ENCODE measurements at regions of chr5 and their contacts with region 1.

Region 1: GRCh38 chr5:95591490-95591901 is 28.4 kb upstream of the GPR150 start:
- DNase-seq: no peak
- H3K4me3 Mint-ChIP-seq: no peak overlapping the region
- H3K27ac Mint-ChIP-seq: no peak overlapping the region
- H3K4me1 Mint-ChIP-seq: peaks cover 30% of the 10 kb centered on the region
- H3K27me3 Mint-ChIP-seq: no peaks in the 10 kb centered on the region

Region 2: DNA sequence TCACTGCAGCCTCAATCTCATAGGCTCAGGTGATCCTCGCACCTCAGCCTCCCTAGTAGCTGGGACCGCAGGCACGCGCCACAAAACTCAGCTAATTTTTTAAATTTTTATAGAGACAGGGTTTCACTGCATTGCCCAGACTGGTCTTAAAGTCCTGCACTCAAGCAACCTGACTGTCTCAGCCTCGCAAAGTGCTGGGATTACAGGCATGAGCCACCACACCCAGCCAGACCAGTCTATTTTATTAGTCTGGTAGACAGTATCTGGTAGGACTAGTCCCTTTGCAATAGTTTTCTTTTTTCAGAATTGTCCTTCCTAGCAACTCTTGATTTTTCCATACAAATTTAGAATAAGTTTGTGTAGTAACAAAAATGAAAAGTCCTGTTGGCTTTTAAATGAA is 14.3 kb after region 1 on chr5:
- CTCF ChIA-PET with region 1: no interaction called
- POLR2A ChIA-PET with region 1: no interaction called
- intact Hi-C with region 1: no loop called
- DNase-seq: no peak
- H3K4me3 Mint-ChIP-seq: no peak overlapping the region
- H3K27ac Mint-ChIP-seq: no peak overlapping the region
- H3K4me1 Mint-ChIP-seq: no peaks in the 10 kb centered on the region
- H3K27me3 Mint-ChIP-seq: no peaks in the 10 kb centered on the region

Region 3: DNA sequence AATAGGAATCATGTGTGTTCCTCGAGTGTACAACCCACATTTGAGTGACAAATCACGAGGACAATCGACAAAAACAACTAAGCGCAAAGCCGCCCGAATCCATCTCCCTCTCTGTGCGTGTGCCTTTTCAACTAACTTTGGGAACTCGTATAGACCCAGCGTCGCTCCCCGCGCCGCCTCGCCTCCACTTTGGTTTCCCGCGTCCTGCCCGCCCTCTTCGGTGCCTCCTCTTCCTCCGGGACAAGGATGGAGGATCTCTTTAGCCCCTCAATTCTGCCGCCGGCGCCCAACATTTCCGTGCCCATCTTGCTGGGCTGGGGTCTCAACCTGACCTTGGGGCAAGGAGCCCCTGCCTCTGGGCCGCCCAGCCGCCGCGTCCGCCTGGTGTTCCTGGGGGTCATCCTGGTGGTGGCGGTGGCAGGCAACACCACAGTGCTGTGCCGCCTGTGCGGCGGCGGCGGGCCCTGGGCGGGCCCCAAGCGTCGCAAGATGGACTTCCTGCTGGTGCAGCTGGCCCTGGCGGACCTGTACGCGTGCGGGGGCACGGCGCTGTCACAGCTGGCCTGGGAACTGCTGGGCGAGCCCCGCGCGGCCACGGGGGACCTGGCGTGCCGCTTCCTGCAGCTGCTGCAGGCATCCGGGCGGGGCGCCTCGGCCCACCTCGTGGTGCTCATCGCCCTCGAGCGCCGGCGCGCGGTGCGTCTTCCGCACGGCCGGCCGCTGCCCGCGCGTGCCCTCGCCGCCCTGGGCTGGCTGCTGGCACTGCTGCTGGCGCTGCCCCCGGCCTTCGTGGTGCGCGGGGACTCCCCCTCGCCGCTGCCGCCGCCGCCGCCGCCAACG is 28.8 kb after region 1 on chr5 and contains the start of gene GPR150:
- CTCF ChIA-PET with region 1: interaction called, 3 read pairs
- POLR2A ChIA-PET with region 1: no interaction called
- intact Hi-C with region 1: loop called (anchors 1 kb)
- DNase-seq: peak; percentile 78
- H3K4me3 Mint-ChIP-seq: peak within 1 kb of the TSS; percentile 80
- H3K27ac Mint-ChIP-seq: peak within 1 kb of the TSS; percentile 66
- H3K4me1 Mint-ChIP-seq: peaks cover 55% of the 10 kb centered on the region
- H3K27me3 Mint-ChIP-seq: no peaks in the 10 kb centered on the region
- total RNA-seq, gene GPR150: 0.50 to 0.82 TPM

Region 4: DNA sequence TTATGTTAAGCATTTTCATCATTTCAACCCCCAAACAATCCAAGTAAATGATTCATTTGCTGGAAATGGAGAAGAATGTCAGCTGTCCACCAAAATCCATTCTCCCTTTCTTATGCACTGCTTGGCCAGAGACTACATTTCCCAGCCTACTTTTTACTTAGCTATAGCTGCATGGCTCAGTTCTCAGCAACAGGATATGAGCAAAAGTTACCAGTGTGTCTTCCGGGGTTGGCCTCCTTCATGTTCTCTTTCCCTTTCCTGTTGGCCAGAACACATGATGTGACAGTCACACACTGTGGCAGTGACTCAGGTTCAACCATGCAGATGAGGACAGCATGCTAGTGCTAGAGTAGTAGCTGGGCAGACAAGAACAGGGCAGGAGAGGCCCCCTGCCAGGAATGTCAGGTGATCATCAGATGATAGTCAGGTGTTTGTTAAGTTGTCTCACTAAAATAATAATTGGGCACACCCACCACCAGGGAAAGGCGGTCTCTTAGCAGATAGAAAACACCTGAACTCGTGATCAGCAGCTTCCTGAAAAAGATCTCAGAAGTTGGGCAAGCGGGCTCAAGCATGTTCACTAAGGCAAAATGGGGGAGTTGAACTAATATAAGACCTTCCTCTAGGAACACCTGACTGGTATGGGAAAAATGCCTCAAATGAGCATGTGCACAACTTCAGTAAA is 40.6 kb after region 1 on chr5:
- CTCF ChIA-PET with region 1: no interaction called
- POLR2A ChIA-PET with region 1: no interaction called
- intact Hi-C with region 1: loop called (anchors 1 kb)
- DNase-seq: peak; percentile 86
- H3K4me3 Mint-ChIP-seq: peak overlapping the region; percentile 51
- H3K27ac Mint-ChIP-seq: peak overlapping the region; percentile 91
- H3K4me1 Mint-ChIP-seq: peaks cover 22% of the 10 kb centered on the region
- H3K27me3 Mint-ChIP-seq: no peaks in the 10 kb centered on the region

Region 5: GRCh38 chr5:95760273-95761191 is 169.0 kb after region 1 on chr5:
- CTCF ChIA-PET with region 1: no interaction called
- POLR2A ChIA-PET with region 1: no interaction called
- intact Hi-C with region 1: loop called (anchors 1 kb)
- DNase-seq: no peak
- H3K4me3 Mint-ChIP-seq: peak overlapping the region; percentile 57
- H3K27ac Mint-ChIP-seq: peak overlapping the region; percentile 64
- H3K4me1 Mint-ChIP-seq: peaks cover 23% of the 10 kb centered on the region
- H3K27me3 Mint-ChIP-seq: peaks cover 4% of the 10 kb centered on the region